Posterior cingulate gyrus (tissue), 11 donors: ENCODE measurements at regions of chr1 and their contacts with region 1.

Region 1: DNA sequence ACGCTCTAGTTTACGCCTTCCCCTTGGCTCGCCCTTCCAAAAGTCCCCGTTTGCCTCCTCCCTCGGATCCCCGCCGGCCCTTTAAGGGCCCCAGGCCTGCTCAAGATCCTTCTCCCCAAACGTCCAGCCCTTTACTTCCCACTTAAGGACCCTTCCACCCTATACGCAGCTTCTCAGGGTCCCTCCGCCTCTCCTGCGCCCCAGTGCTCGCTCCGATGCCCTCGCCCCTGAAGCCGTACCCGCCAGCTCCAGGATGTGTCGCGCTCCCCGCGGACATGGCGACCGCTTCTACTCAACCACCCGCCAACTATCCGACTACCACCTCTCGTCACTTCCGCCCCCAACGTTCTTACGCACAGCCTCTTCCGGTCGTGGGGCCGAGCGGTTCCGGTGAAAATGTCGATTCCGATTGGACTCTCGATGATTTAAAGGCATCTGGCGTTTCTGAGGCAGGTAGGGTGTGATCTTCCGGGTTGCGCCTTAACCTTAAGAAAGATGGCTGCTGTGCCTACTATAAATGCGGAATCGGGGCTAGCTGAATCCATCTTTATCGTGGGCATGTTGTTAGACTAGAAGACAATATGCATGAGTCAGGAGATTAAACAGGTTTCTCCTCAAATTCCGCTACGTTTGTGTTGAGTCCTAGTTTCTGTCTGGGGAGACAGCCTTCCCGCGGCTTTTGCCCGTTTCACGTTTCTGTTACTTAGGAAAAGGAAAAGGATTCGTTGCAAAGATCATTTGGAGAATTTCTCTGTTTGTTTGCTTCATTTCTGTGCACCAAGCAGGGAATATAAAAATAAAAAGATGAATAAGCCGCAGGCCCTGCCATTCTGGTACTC is at the start of gene KHDC4:
- DNase-seq: peak; percentile 91 to 99 (median 96)

Region 2: GRCh38 chr1:155834296-155834926 is 99.9 kb before region 1 on chr1:
- intact Hi-C with region 1: no loop called
- DNase-seq: no peak

Region 3: DNA sequence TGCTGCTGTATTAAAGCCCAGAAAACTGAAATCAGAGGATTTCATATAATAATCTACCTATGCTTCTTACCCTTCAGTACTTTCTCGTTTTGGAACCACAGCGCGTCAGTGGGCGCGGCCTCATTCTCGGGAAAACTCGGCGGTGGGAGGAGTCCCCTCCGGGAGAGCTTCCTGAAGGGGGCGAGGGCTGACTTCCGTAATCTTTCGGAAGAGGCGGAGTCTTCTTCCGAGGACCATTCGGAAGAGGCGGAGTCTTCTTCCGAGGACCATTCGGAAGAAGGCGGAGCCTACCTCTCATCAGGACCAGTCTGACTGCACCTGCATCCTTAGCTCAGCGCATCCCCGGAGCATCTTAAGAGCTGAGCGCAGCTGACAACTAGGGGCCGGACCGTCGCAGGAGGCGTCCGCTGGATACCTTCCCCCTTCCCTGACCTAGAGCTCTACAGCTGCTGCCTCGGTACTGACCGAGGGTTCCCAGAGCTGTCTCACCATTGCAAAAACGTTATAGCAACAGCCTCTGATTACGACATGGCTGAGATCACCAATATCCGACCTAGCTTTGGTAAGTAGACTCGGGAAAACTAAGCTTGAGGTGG is 75.0 kb before region 1 on chr1 and contains the start of gene SYT11:
- intact Hi-C with region 1: loop called (anchors 2 kb)
- DNase-seq: peak; percentile 93 to 99 (median 94)

Region 4: DNA sequence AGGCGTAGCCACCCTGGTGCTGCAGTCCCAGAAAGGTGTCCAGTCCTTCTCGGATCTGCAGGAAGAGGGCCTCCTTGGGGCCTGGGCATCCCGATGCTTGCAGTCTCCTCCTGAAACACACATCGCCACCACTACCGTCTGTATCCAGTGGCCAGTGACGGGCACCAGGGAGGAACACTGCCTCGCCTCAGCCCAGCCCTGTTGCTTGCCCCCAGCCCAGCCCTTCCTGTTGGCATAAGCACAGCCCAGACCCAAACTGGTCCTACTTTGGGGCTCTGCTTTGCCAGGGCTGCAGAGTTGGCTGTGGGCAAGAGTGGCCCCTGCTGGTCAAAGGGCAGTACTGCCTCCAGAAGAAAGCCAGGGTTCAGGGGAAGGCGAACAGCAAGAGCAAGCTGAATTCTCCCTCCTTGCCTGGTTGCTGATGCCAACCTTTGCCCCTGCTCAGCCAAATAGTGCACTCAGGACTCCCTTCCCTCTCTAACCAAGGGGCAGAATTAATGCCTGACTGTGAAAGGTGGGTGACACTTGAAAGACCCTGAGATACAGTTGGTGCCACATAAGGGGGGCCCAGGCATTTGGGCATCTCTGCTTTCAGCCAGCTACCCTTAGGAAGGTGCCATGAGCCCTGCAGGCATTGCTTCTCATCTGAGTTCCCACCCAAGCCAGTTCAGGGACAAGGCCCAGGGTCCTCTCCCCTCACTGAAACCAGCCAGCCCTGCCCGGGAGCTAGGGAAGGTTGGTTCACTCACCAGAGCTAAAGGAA is 55.1 kb after region 1 on chr1:
- intact Hi-C with region 1: loop called (anchors 1 kb)
- DNase-seq: peak; percentile 69 to 97 (median 82)

Region 5: GRCh38 chr1:156054500-156055280 is 120.4 kb after region 1 on chr1 and contains the start of gene LAMTOR2:
- intact Hi-C with region 1: loop called (anchors 1 kb)
- DNase-seq: peak; percentile 98 to 100 (median 98)